ENCODE measurements at regions of chr3 and their contacts with region 1.

Region 1: DNA sequence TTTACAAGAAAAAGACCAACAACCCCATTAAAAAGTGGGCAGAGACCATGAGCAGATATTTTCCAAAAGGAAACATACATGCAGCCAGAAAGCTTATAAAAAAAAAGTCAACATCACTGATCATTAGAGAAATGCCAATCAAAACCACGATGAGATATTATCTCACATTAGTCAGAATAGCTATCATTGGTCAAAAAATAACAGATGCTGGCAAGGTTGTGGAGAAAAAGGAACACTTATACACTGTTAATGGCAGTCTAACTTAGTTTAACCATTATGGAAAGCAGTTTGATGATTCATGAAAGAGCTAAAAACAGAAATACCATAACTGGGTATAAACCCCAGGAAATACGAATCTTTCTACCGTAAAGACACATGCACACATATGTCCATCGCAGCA is 76.3 kb downstream of the SUCNR1 start:
- DNase-seq: no peak
- H3K4me3 ChIP-seq: no peak overlapping the region
- H3K27me3 ChIP-seq: no peaks in the 10 kb centered on the region
- CTCF ChIP-seq: no peak

Region 2: GRCh38 chr3:151740581-151740980 is 209.1 kb before region 1 on chr3:
- CTCF ChIA-PET with region 1: no interaction called
- POLR2A ChIA-PET with region 1: no interaction called
- DNase-seq: no peak
- H3K4me3 ChIP-seq: no peak overlapping the region
- H3K27me3 ChIP-seq: no peaks in the 10 kb centered on the region
- CTCF ChIP-seq: no peak

Region 3: GRCh38 chr3:151960961-151961579 is 11.4 kb after region 1 on chr3:
- CTCF ChIA-PET with region 1: interaction called, 10 read pairs
- POLR2A ChIA-PET with region 1: no interaction called
- DNase-seq: peak; percentile 26
- H3K4me3 ChIP-seq: no peak overlapping the region
- H3K27me3 ChIP-seq: no peaks in the 10 kb centered on the region
- CTCF ChIP-seq: no peak